HepG2 (cell line): ENCODE measurements at regions of chr12 and their contacts with region 1.

Region 1: GRCh38 chr12:53098982-53099651 is 1.6 kb downstream of the IGFBP6 start:
- DNase-seq: peak; percentile 91
- ATAC-seq: peak; percentile 24
- H3K4me3 ChIP-seq: peak overlapping the region; percentile 56 to 90 (median 78); a peak in 5 of 6 replicates
- H3K27ac ChIP-seq: no peak overlapping the region
- H3K4me1 ChIP-seq: peaks cover 91% of the 10 kb centered on the region
- H3K27me3 ChIP-seq: peaks cover 0 to 6% of the 10 kb centered on the region in 2 experiments; a peak in 2 of 5 replicates
- CTCF ChIP-seq: peak; percentile 89
- EP300 ChIP-seq: peak in 1 of 2 experiments; percentile 51; a peak in 1 of 4 replicates
- POLR2A ChIP-seq: no peak
- RAD21 ChIP-seq: peak; percentile 89

Region 2: DNA sequence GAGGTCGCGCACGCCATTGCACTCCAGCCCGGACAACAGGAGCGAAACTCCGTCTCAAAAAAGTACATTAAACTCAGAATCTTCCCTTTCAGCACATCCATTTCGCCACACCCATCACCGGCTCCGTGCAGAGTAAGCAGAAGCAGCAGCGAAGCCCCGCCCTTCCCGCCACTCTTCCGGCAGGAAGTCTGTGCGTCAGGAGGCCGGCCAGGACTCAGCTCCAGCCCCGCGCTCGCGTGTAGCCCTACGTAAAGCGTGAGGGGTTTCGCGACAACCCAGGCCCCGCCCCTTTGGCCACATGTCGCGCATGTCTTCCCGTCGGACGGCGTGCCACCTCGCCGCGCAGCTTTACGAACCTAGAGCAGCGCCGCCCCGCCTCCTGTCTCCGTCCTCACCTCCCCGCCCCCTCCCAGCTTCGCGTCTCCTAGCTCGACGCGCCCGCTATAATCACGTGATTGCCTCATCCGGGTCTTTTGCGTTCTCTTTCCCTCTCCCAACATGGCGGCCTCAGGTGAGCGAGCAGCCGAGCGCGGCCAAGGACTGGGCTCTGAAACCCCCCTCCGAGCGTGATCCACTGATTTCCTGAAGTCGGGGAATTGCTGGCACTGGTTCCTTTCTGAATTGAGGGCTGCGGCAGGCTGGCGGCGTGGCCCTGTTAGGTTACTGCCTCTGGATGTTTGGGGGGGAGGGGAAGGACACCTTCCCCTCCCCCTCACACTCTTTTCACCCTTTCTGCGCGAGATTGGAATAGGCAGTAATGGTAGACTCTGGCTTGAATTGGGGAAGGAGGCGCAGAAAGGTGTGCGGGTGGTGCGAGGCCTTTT is 92.9 kb before region 1 on chr12 and contains the start of gene EIF4B:
- CTCF ChIA-PET with region 1: no interaction called
- POLR2A ChIA-PET with region 1: interaction called, 12 read pairs
- in situ Hi-C with region 1: no loop called
- intact Hi-C with region 1: no loop called
- DNase-seq: peak; percentile 97
- ATAC-seq: peak; percentile 96
- H3K4me3 ChIP-seq: peak within 1 kb of the TSS; percentile 89 to 93 (median 92)
- H3K27ac ChIP-seq: peak within 1 kb of the TSS; percentile 99
- H3K4me1 ChIP-seq: peaks cover 47% of the 10 kb centered on the region
- H3K27me3 ChIP-seq: no peaks in the 10 kb centered on the region; a peak in 1 of 5 replicates
- CTCF ChIP-seq: peak; percentile 22; the same call in 1 of the 2 replicates
- EP300 ChIP-seq: no peak; a peak in 2 of 4 replicates
- POLR2A ChIP-seq: peak; percentile 52 to 70; a peak in 3 of 4 replicates
- RAD21 ChIP-seq: no peak
- total RNA-seq, gene EIF4B: 548 and 779 TPM in 2 replicates

Region 3: GRCh38 chr12:53054112-53054833 is 44.8 kb before region 1 on chr12:
- CTCF ChIA-PET with region 1: no interaction called
- POLR2A ChIA-PET with region 1: interaction called, 65 read pairs
- in situ Hi-C with region 1: no loop called
- intact Hi-C with region 1: no loop called
- DNase-seq: peak; percentile 83
- ATAC-seq: peak; percentile 19
- H3K4me3 ChIP-seq: peak overlapping the region; percentile 52 to 73 (median 60); a peak in 5 of 6 replicates
- H3K27ac ChIP-seq: peak overlapping the region; percentile 69
- H3K4me1 ChIP-seq: peaks cover 40% of the 10 kb centered on the region
- H3K27me3 ChIP-seq: no peaks in the 10 kb centered on the region
- CTCF ChIP-seq: no peak
- EP300 ChIP-seq: no peak
- POLR2A ChIP-seq: peak in 1 of 2 experiments; percentile 44; a peak in 1 of 4 replicates
- RAD21 ChIP-seq: no peak

Region 4: DNA sequence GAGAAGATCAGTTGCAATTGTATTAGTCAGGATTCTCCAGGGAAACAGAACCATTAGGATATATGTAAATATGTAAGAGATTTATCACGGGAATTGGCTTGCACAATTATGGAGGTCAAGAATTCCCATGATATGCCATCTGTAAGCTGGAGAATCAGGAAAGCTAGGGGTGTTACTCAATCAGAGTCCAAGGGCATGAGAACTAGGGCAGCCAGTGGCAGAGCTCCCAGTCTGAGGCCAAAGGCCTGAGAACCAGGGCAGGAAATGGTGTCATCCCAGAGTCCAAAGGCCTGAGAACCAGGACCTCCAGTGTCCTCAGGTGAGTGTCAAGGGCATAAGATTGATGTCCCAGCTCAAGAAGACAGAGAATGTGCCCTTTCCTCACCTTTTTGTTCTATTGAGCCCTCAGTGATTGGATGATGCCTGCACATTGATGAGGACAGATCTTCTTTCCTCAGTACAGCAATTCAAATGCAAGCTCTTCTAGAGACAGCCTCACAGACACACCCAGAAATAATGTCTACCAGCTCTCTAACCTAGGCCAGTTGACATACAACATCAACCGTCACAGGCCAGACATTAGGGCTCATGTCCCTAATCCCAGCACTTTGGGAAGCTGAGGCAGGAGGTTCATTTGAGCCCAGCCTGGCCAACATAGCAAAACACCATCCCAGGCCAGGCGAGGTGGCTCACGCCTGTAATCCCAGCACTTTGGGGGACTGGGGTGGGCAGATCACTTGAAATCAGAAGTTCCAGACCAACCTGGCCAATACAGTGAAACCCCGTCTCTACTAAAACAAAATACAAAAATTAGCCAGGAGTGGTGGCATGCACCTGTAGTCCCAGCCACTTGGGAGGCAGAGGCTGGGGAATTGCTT is 46.5 kb after region 1 on chr12:
- CTCF ChIA-PET with region 1: no interaction called
- POLR2A ChIA-PET with region 1: interaction called, 18 read pairs
- in situ Hi-C with region 1: no loop called
- intact Hi-C with region 1: loop called (anchors 5 kb)
- DNase-seq: peak; percentile 84
- ATAC-seq: peak; percentile 98
- H3K4me3 ChIP-seq: no peak overlapping the region
- H3K27ac ChIP-seq: no peak overlapping the region
- H3K4me1 ChIP-seq: peaks cover 23% of the 10 kb centered on the region
- H3K27me3 ChIP-seq: no peaks in the 10 kb centered on the region
- CTCF ChIP-seq: no peak
- EP300 ChIP-seq: peak in 1 of 2 experiments; percentile 34; a peak in 1 of 4 replicates
- POLR2A ChIP-seq: no peak
- RAD21 ChIP-seq: no peak

Region 5: GRCh38 chr12:53180220-53180930 is 81.3 kb after region 1 on chr12 and contains the starts of genes CSAD and ZNF740:
- CTCF ChIA-PET with region 1: no interaction called
- POLR2A ChIA-PET with region 1: interaction called, 14 read pairs
- in situ Hi-C with region 1: no loop called
- intact Hi-C with region 1: no loop called
- DNase-seq: peak; percentile 95
- ATAC-seq: peak; percentile 98
- H3K4me3 ChIP-seq: peak within 1 kb of the TSS; percentile 64 to 93 (median 82)
- H3K27ac ChIP-seq: peak within 1 kb of the TSS; percentile 91
- H3K4me1 ChIP-seq: peaks cover 56% of the 10 kb centered on the region
- H3K27me3 ChIP-seq: no peaks in the 10 kb centered on the region; a peak in 1 of 5 replicates
- CTCF ChIP-seq: no peak; the same call in 1 of the 2 replicates
- EP300 ChIP-seq: no peak
- POLR2A ChIP-seq: peak; percentile 75 to 88
- RAD21 ChIP-seq: no peak
- total RNA-seq, gene CSAD: 2.7 and 7.2 TPM in 2 replicates
- total RNA-seq, gene ZNF740: 15.0 and 16.9 TPM in 2 replicates